CD4-positive, alpha-beta memory T cell (primary cell): ENCODE measurements at regions of chr6 and their contacts with region 1.

Region 1: DNA sequence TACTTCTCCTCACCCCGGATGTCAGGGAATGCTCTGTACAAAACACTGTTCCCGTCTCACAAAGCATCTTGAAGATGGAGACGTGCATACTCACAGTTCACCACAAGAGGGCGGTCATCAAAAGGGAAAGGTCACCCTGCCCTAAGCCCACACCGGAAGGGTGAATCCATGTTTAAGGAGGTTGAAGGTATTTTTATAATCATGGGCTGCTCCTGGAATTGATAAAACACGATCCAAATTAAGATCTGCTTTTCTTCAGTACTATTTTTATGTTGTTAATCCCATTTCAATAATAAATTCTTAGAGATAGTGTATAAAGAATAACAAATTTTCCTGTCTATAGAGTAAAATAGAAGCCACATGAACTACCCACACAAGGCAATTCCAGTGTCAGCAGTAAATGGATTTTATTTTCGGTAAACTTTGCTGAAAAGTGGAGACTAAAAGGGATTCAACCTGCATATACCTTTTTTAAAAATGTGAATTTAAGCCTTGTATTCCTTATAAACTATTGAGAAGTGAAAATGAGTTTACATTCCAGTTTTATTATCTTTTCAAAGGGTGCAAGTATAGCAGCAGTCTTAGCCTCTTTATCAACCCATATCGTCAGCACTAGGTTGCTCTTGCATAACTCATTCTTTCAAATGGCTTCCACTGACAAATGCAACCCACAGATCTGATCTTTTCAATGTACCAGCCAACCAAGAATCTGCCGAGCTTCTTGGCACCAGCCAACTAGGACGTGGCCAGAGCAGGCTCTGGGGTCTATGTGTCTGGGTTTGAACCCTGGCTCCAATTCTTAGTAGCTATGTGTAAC is 79.7 kb upstream of the MBOAT1 start:
- DNase-seq: peak; percentile 55 to 68 (median 61)
- H3K4me3 ChIP-seq: no peak overlapping the region
- H3K4me3 Mint-ChIP-seq: peak overlapping the region in 7 of 8 donors; percentile 4 to 65 (median 34)
- H3K27ac ChIP-seq: no peak overlapping the region
- H3K27ac Mint-ChIP-seq: peak overlapping the region in 4 of 7 donors; percentile 8 to 63 (median 47)
- H3K4me1 ChIP-seq: peaks cover 13% of the 10 kb centered on the region
- H3K4me1 Mint-ChIP-seq: peaks cover 8 to 29% (median 14%) of the 10 kb centered on the region in 4 donors
- H3K27me3 ChIP-seq: no peaks in the 10 kb centered on the region
- H3K27me3 Mint-ChIP-seq: no peaks in the 10 kb centered on the region

Region 2: GRCh38 chr6:20455251-20455940 is 163.4 kb after region 1 on chr6:
- CTCF ChIA-PET with region 1: interaction called, 3 read pairs
- POLR2A ChIA-PET with region 1: no interaction called
- intact Hi-C with region 1: loop called (anchors 1 kb)
- DNase-seq: no peak
- H3K4me3 ChIP-seq: no peak overlapping the region
- H3K4me3 Mint-ChIP-seq: no peak overlapping the region
- H3K27ac ChIP-seq: no peak overlapping the region
- H3K27ac Mint-ChIP-seq: peak overlapping the region in 1 of 7 donors; percentile 77
- H3K4me1 ChIP-seq: peaks cover 21% of the 10 kb centered on the region
- H3K4me1 Mint-ChIP-seq: peaks cover 15 to 35% (median 24%) of the 10 kb centered on the region in 4 donors
- H3K27me3 ChIP-seq: no peaks in the 10 kb centered on the region
- H3K27me3 Mint-ChIP-seq: no peaks in the 10 kb centered on the region

Region 3: DNA sequence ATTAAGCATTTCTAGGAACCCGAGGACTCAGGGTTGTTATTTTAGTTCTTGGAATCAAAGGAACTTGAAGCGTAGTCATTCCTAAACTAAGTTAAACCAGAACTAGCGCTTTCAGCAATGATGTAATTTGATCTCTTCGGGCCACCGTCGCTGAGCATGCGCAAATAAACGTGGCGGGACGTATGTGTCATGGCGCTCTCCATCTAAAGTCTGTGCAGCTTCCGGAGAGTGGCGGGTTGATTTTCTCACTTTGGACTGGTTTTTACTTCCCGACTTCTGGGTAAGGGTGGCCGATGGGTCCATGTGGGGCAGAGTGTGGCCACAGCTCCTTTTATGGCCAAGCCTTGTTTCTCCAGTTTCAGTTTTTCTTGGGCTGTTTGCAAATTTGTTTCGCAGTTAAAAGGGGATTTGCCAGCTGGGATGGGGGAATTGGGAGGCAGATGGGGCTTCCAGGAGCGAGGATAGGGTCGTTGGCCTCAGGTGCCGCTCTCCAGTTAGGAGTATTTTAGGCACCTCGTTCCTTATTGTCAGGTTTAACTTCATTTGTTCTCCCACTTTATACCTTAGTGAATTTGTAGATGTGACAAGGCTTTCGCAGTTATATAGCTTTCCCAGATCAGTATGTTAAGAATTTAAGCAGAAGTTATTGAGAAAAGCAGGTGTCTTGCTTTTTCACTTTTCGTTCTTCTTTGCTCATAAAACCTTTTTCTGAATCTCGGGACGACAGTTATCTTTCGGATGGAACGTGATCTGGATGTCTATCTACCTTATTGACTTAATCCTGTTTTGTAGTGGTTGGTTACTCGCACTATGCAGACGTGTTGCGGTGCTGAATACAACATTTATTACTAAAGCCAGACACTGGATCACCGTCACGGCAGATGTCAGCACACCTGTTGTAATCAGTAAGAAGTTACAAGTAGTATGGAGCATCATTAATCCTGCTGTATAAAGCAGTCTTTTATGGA is 242.6 kb after region 1 on chr6 and contains the start of gene CDKAL1:
- CTCF ChIA-PET with region 1: interaction called, 40 read pairs
- POLR2A ChIA-PET with region 1: interaction called, 4 read pairs
- intact Hi-C with region 1: no loop called
- DNase-seq: peak; percentile 85 to 90 (median 86)
- H3K4me3 ChIP-seq: peak within 1 kb of the TSS; percentile 89 to 99
- H3K4me3 Mint-ChIP-seq: peak within 1 kb of the TSS; percentile 92 to 100 (median 99)
- H3K27ac ChIP-seq: peak within 1 kb of the TSS; percentile 72
- H3K27ac Mint-ChIP-seq: peak within 1 kb of the TSS; percentile 94 to 99 (median 99)
- H3K4me1 ChIP-seq: peaks cover 25% of the 10 kb centered on the region
- H3K4me1 Mint-ChIP-seq: peaks cover 22 to 52% (median 39%) of the 10 kb centered on the region in 4 donors
- H3K27me3 ChIP-seq: no peaks in the 10 kb centered on the region
- H3K27me3 Mint-ChIP-seq: no peaks in the 10 kb centered on the region
- total RNA-seq, gene CDKAL1: 22.3 to 22.7 TPM